ENCODE measurements at regions of chr17 and their contacts with region 1.

Region 1: DNA sequence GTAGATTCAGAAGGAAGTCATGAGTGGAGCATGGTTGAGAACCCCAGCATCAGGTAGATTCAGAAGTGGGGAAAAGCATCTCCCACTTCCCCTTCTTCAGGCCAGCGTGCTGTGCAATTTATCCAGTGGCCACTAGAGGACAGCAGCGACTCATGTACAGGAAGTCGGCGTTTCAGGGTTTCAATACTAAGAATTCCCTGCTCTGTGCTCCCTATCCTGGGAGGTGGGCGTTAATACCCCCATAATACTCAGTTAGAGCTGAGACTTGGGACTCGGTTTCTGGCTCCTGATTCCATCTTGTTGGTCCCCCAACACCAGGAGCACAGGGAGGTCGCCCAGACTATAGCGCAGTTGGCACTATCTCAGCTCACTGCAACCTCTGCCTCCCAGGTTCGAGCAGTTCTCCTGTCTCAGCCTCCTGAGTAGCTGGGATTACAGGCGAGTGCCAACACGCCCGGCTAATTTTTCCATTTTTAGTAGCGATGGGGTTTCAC is 75.3 kb upstream of the AMZ2 start:
- DNase-seq: peak; percentile 83
- H3K4me3 Mint-ChIP-seq: no peak overlapping the region
- H3K27ac Mint-ChIP-seq: no peak overlapping the region
- H3K4me1 Mint-ChIP-seq: peaks cover 16% of the 10 kb centered on the region
- H3K27me3 Mint-ChIP-seq: no peaks in the 10 kb centered on the region

Region 2: DNA sequence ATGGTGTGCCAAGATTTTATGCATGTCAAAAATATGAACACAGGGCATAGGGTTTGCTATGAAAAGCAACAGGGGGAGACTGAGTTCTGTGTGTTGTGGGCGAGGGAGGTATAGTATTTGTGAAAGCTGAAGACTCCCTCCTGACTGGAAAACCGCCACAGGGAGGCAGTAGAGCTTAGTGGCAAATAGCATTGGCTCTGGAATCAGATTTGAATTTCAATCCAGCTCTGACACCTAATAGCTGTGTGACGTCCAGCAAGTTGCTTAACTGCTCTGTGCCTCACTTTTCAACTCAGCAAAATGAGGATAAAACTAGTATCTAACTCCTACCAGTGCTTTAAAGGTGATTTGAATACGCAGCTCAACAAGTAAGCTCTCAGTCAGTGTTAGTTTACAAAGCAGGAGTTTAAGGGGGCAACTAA is 115.0 kb before region 1 on chr17:
- CTCF ChIA-PET with region 1: interaction called, 9 read pairs
- POLR2A ChIA-PET with region 1: no interaction called
- intact Hi-C with region 1: loop called (anchors 5 kb)
- DNase-seq: peak; percentile 68
- H3K4me3 Mint-ChIP-seq: no peak overlapping the region
- H3K27ac Mint-ChIP-seq: no peak overlapping the region
- H3K4me1 Mint-ChIP-seq: peaks cover 23% of the 10 kb centered on the region
- H3K27me3 Mint-ChIP-seq: no peaks in the 10 kb centered on the region

Region 3: GRCh38 chr17:68196944-68197595 is 24.6 kb after region 1 on chr17:
- CTCF ChIA-PET with region 1: interaction called, 55 read pairs
- POLR2A ChIA-PET with region 1: interaction called, 9 read pairs
- intact Hi-C with region 1: loop called (anchors 1 kb)
- DNase-seq: peak; percentile 66
- H3K4me3 Mint-ChIP-seq: peak overlapping the region; percentile 70
- H3K27ac Mint-ChIP-seq: no peak overlapping the region
- H3K4me1 Mint-ChIP-seq: peaks cover 35% of the 10 kb centered on the region
- H3K27me3 Mint-ChIP-seq: peaks cover 13% of the 10 kb centered on the region

Region 4: GRCh38 chr17:68205251-68205807 is 32.8 kb after region 1 on chr17:
- CTCF ChIA-PET with region 1: interaction called, 55 read pairs
- POLR2A ChIA-PET with region 1: no interaction called
- intact Hi-C with region 1: loop called (anchors 1 kb)
- DNase-seq: peak; percentile 93
- H3K4me3 Mint-ChIP-seq: peak overlapping the region; percentile 81
- H3K27ac Mint-ChIP-seq: peak overlapping the region; percentile 89
- H3K4me1 Mint-ChIP-seq: peaks cover 32% of the 10 kb centered on the region
- H3K27me3 Mint-ChIP-seq: no peaks in the 10 kb centered on the region

Region 5: GRCh38 chr17:68468334-68468733 is 295.8 kb after region 1 on chr17:
- CTCF ChIA-PET with region 1: interaction called, 20 read pairs
- POLR2A ChIA-PET with region 1: no interaction called
- intact Hi-C with region 1: loop called (anchors 1 kb)
- DNase-seq: no peak
- H3K4me3 Mint-ChIP-seq: no peak overlapping the region
- H3K27ac Mint-ChIP-seq: no peak overlapping the region
- H3K4me1 Mint-ChIP-seq: peaks cover 5% of the 10 kb centered on the region
- H3K27me3 Mint-ChIP-seq: peaks cover 5% of the 10 kb centered on the region

Measured in activated CD4-positive, alpha-beta memory T cell treated with anti-CD3 and anti-CD28 coated beads for 36 hours (primary cell).